Posterior vena cava (tissue), 2 donors: ENCODE measurements at regions of chr12 and their contacts with region 1.

Region 1: GRCh38 chr12:45102818-45103217 is 51.9 kb upstream of the DBX2 start:
- DNase-seq: no peak

Region 2: GRCh38 chr12:44603701-44604100 is 499.1 kb before region 1 on chr12:
- intact Hi-C with region 1: loop called in 1 of 2 experiments (anchors 5 kb)
- DNase-seq: no peak

Region 3: GRCh38 chr12:45138609-45139008 is 35.8 kb after region 1 on chr12:
- intact Hi-C with region 1: no loop called
- DNase-seq: no peak

Region 4: DNA sequence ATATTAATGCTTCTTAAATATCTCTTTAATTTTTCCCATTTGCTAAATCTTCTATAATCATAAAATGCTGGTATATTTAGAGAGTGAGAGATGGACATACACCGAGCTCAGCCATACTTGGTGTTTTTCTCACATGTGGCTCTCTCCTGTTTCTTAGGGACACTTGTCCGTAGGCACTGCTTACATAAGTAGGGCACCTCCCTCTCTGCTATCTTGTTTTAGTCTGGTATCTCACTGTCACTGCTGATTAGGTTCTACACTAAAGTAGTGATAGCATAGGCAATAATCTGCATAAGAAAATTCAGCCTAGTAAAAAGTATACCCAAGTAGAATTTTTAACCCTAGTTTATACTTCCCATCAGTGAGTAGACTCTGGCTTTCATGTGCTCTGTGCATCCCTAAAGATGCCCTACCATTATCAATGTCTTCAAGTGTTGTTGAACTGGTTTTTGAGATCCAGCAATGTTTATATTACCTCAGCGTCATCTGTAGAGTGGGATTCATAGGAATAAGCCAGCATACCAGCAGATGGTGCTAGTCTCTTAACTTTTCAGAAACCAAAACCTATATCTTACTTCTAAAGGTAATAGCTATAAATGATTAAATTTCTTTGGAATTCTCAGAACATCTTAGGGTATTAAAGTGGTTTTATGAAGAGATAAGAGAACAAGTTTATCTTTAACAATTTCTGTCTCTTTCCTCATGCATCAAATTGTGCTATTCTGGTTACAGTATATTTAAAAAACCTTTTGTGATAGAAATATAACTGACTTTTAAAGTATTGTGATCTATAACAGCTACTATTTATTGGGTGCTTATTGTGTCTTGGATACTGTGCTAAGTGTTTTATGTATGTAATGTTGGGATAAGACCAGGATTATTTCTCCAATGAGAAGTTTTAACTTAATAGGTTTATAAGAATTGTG is 659.6 kb after region 1 on chr12:
- intact Hi-C with region 1: no loop called
- DNase-seq: no peak